ENCODE measurements at regions of chr14 and their contacts with region 1.

Region 1: GRCh38 chr14:103546652-103547454 is 15.6 kb downstream of the BAG5 start:
- DNase-seq: peak in 1 of 2 donors; percentile 39
- H3K4me3 ChIP-seq: no peak overlapping the region
- CTCF ChIP-seq: peak in 1 of 3 donors; percentile 90
- POLR2A ChIP-seq: no peak

Region 2: GRCh38 chr14:103436533-103436932 is 110.3 kb before region 1 on chr14:
- intact Hi-C with region 1: no loop called
- DNase-seq: no peak
- H3K4me3 ChIP-seq: no peak overlapping the region
- CTCF ChIP-seq: no peak
- POLR2A ChIP-seq: no peak

Region 3: DNA sequence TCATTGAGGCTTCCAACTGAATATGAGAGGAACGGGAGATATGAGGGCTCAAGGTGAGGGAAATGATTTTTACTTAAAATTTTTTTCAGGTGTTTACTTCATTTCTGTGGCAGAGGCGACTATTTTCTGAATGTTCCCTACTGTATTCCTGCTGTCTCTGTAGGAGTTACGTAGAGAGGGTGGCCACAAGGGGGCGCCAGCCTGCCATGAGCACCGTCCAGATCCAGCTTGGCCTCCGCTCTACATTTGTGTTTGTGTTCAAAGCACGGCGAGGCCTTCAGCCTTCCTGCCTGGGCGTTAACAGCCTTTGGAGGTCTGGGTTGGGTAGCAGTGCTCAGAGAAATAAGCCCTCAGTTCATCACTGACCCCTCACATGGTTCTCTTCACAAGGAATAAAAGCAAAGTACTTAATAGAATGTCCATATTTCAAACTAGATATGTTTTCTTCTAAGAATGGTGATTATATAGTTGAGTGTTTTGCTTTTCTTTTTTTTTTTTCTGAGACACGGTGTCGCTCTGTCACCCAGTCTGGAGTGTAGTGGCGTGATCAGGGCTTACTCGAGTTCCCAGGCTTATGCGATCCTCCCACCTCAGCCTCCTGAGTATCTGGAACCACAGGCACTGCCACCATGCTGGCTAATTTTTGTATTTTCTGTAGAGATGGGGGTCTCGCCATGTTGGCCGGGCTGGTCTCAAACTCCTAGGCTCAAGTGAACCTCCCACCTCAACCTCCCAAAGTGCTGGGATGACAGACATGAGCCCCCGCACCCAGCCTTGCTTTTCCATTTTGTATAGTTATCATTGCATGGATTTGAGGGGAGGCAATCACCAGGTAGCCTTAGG is 46.5 kb before region 1 on chr14:
- intact Hi-C with region 1: loop called (anchors 5 kb)
- DNase-seq: peak; percentile 87 to 98
- H3K4me3 ChIP-seq: no peak overlapping the region
- CTCF ChIP-seq: peak in 1 of 3 donors; percentile 70
- POLR2A ChIP-seq: no peak

Region 4: GRCh38 chr14:103613517-103613916 is 66.7 kb after region 1 on chr14:
- intact Hi-C with region 1: no loop called
- DNase-seq: no peak
- H3K4me3 ChIP-seq: no peak overlapping the region
- CTCF ChIP-seq: no peak
- POLR2A ChIP-seq: no peak

Measured in lower leg skin (tissue), 4 donors.